CD8-positive, alpha-beta T cell (primary cell): ENCODE measurements at regions of chr13 and their contacts with region 1.

Region 1: GRCh38 chr13:99656092-99656745 is 154.9 kb downstream of the TM9SF2 start:
- DNase-seq: peak; percentile 71 to 90 (median 86)
- ATAC-seq: peak; percentile 61
- H3K4me3 ChIP-seq: peak overlapping the region; percentile 30 to 32
- H3K4me3 Mint-ChIP-seq: peak overlapping the region; percentile 84
- H3K27ac ChIP-seq: peak overlapping the region; percentile 12 to 22
- H3K27ac Mint-ChIP-seq: peak overlapping the region; percentile 97
- H3K4me1 ChIP-seq: peaks cover 42% of the 10 kb centered on the region
- H3K4me1 Mint-ChIP-seq: peaks cover 47% of the 10 kb centered on the region
- H3K27me3 ChIP-seq: no peaks in the 10 kb centered on the region
- H3K27me3 Mint-ChIP-seq: no peaks in the 10 kb centered on the region
- CTCF ChIP-seq: peak; percentile 92

Region 2: DNA sequence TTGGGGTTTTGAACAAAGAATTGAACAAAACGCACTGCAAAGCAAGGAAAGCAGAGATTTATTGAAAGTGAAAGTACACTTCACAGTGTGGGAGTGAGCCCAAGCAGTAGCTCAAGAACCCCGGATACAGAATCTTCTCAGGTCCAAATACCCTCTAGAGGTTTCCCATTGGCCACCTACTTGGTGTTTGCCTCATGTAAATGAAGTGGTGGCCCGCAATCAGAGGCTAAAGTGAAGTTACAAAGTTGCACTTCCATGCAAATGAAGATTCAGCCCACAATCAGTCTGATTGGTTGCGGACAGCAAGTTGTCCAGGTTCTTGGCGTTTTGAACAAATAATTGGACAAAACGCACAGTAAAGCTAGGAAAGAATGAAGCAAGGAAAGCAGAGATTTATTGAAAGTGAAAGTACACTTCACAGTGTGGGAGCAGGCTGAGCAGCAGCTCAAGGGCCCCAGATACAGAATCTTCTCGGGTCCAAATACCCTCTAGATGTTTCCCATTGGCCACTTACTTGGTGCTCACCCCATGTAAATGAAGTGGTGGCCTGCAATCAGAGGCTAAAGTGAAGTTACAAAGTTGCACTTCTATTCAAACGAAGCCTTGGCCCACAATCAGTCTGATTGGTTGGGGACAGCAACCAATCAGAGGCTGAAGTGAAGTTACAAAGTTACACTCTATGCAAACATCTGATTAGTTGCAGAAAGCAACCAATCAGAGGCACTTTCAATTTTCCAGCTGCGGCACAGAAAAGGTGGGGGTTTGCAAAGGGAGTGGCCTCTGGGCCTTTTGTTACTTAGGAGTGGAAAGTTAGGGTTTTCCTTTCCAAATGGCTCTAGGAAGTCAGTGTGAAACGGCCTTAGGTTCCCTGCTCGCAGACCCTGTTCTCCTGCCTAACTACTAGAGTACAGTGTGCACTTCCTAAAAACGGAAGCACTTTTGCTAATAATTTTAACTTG is 159.8 kb before region 1 on chr13:
- CTCF ChIA-PET with region 1: no interaction called
- POLR2A ChIA-PET with region 1: no interaction called
- intact Hi-C with region 1: no loop called
- DNase-seq: peak; percentile 41 to 90 (median 65)
- ATAC-seq: peak; percentile 42
- H3K4me3 ChIP-seq: peak overlapping the region; percentile 57 to 63
- H3K4me3 Mint-ChIP-seq: peak overlapping the region; percentile 88
- H3K27ac ChIP-seq: peak overlapping the region; percentile 53 to 79
- H3K27ac Mint-ChIP-seq: peak overlapping the region; percentile 94
- H3K4me1 ChIP-seq: peaks cover 46% of the 10 kb centered on the region
- H3K4me1 Mint-ChIP-seq: peaks cover 60% of the 10 kb centered on the region
- H3K27me3 ChIP-seq: no peaks in the 10 kb centered on the region
- H3K27me3 Mint-ChIP-seq: no peaks in the 10 kb centered on the region
- CTCF ChIP-seq: no peak

Region 3: GRCh38 chr13:99528547-99528946 is 127.7 kb before region 1 on chr13:
- CTCF ChIA-PET with region 1: interaction called, 9 read pairs
- POLR2A ChIA-PET with region 1: no interaction called
- intact Hi-C with region 1: loop called in 1 of 2 experiments (anchors 2 kb)
- DNase-seq: peak in 4 of 9 experiments; percentile 13 to 59 (median 36)
- ATAC-seq: peak; percentile 46
- H3K4me3 ChIP-seq: no peak overlapping the region
- H3K4me3 Mint-ChIP-seq: no peak overlapping the region
- H3K27ac ChIP-seq: no peak overlapping the region
- H3K27ac Mint-ChIP-seq: no peak overlapping the region
- H3K4me1 ChIP-seq: peaks cover 12% of the 10 kb centered on the region
- H3K4me1 Mint-ChIP-seq: peaks cover 46% of the 10 kb centered on the region
- H3K27me3 ChIP-seq: no peaks in the 10 kb centered on the region
- H3K27me3 Mint-ChIP-seq: no peaks in the 10 kb centered on the region
- CTCF ChIP-seq: peak; percentile 32

Region 4: DNA sequence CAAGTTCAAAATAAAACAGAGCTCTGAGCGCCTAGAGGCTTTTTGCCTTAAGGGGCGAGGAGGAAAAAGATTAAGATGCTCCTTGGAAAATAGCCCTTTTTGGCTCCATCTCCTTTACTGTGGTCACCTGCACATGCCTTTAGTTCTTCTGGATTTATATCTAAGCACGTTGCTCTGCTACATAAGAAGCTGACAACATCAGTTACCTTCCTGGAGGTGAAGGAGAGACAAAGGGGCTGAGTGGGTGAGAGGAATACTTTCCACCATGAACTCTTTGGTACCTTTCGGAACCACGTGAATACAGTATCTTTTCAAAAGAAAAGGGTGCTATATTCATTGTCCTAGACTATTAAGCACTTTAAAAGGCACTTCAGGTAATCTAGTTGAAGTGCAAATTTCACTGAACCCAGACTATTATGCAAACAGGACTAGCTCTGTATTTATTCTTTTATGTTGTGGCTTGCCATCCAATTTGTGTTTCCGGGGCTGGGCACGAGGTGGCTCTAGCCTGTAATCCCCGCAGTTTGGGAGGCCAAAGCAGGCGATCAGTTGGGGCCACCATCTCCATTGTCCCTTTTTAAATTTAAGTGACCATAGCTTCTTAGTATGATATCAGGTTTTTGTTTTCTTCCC is 46.6 kb after region 1 on chr13:
- CTCF ChIA-PET with region 1: no interaction called
- POLR2A ChIA-PET with region 1: no interaction called
- intact Hi-C with region 1: no loop called
- DNase-seq: no peak
- ATAC-seq: no peak
- H3K4me3 ChIP-seq: no peak overlapping the region
- H3K4me3 Mint-ChIP-seq: no peak overlapping the region
- H3K27ac ChIP-seq: no peak overlapping the region
- H3K27ac Mint-ChIP-seq: no peak overlapping the region
- H3K4me1 ChIP-seq: no peaks in the 10 kb centered on the region
- H3K4me1 Mint-ChIP-seq: peaks cover 4% of the 10 kb centered on the region
- H3K27me3 ChIP-seq: no peaks in the 10 kb centered on the region
- H3K27me3 Mint-ChIP-seq: no peaks in the 10 kb centered on the region
- CTCF ChIP-seq: no peak

Region 5: DNA sequence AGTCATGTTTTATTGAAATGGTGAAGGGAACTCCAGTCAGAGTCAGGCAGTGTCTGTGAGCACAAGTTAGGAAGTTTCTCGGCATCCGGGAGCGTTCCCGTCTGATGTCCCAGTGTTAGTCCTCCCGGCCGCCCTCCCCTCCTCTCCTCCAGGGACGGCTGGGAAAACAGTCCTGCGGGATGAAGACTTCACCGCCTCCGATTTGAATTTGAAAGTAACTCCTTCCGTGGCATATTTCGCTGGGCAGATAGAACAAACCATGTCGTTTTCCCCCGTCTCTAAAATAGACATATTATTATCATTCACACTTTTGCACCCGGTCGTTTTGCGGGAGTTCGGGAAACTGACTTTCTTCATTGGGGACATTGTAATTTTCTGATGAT is 238.6 kb after region 1 on chr13:
- CTCF ChIA-PET with region 1: interaction called, 33 read pairs
- POLR2A ChIA-PET with region 1: no interaction called
- intact Hi-C with region 1: no loop called
- DNase-seq: no peak
- ATAC-seq: no peak
- H3K4me3 ChIP-seq: peak overlapping the region; percentile 50 to 51
- H3K4me3 Mint-ChIP-seq: peak overlapping the region; percentile 82
- H3K27ac ChIP-seq: no peak overlapping the region
- H3K27ac Mint-ChIP-seq: no peak overlapping the region
- H3K4me1 ChIP-seq: peaks cover 15% of the 10 kb centered on the region
- H3K4me1 Mint-ChIP-seq: peaks cover 14% of the 10 kb centered on the region
- H3K27me3 ChIP-seq: peaks cover 11 to 12% of the 10 kb centered on the region in 2 experiments
- H3K27me3 Mint-ChIP-seq: peaks cover 46% of the 10 kb centered on the region
- CTCF ChIP-seq: no peak

Region 6: GRCh38 chr13:100088644-100089464 is 432.6 kb after region 1 on chr13 and contains the start of gene PCCA:
- CTCF ChIA-PET with region 1: interaction called, 4 read pairs
- POLR2A ChIA-PET with region 1: no interaction called
- intact Hi-C with region 1: loop called in 1 of 2 experiments (anchors 2 kb)
- DNase-seq: peak; percentile 34 to 84 (median 78)
- ATAC-seq: peak; percentile 71
- H3K4me3 ChIP-seq: peak within 1 kb of the TSS; percentile 81 to 88
- H3K4me3 Mint-ChIP-seq: peak within 1 kb of the TSS; percentile 98
- H3K27ac ChIP-seq: peak within 1 kb of the TSS; percentile 35 to 40
- H3K27ac Mint-ChIP-seq: peak within 1 kb of the TSS; percentile 82
- H3K4me1 ChIP-seq: peaks cover 28% of the 10 kb centered on the region
- H3K4me1 Mint-ChIP-seq: peaks cover 30% of the 10 kb centered on the region
- H3K27me3 ChIP-seq: no peaks in the 10 kb centered on the region
- H3K27me3 Mint-ChIP-seq: no peaks in the 10 kb centered on the region
- CTCF ChIP-seq: no peak
- total RNA-seq, gene PCCA: 6.2 to 7.5 TPM

Region 7: GRCh38 chr13:100542826-100543156 is 886.6 kb after region 1 on chr13:
- CTCF ChIA-PET with region 1: interaction called, 10 read pairs
- POLR2A ChIA-PET with region 1: no interaction called
- intact Hi-C with region 1: loop called (anchors 1 to 10 kb)
- DNase-seq: peak in 2 of 9 experiments; percentile 30 to 55
- ATAC-seq: peak; percentile 69
- H3K4me3 ChIP-seq: no peak overlapping the region
- H3K4me3 Mint-ChIP-seq: peak overlapping the region; percentile 52
- H3K27ac ChIP-seq: no peak overlapping the region
- H3K27ac Mint-ChIP-seq: no peak overlapping the region
- H3K4me1 ChIP-seq: peaks cover 10% of the 10 kb centered on the region
- H3K4me1 Mint-ChIP-seq: peaks cover 28% of the 10 kb centered on the region
- H3K27me3 ChIP-seq: no peaks in the 10 kb centered on the region
- H3K27me3 Mint-ChIP-seq: no peaks in the 10 kb centered on the region
- CTCF ChIP-seq: peak; percentile 54

Region 8: DNA sequence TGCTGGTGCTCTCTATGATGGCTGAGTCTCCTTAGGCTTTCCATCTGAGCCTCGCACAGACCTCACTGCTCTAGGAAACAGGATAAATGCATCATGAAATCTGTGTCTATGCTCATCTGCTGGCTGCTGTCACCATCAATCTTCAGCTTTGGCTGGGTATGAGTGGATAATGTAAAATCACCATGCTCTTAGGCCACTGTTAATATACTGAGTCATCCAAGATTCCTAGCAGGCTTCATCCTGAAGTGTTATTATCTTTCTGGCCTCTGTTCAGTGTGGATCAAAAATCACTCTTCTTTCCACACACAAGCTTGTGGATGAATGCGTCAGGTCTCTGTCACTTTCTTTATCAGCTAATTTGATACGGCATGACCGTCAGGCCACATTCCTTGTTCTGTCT is 1442.7 kb after region 1 on chr13:
- CTCF ChIA-PET with region 1: no interaction called
- POLR2A ChIA-PET with region 1: no interaction called
- intact Hi-C with region 1: loop called in 1 of 2 experiments (anchors 5 kb)
- DNase-seq: no peak
- ATAC-seq: no peak
- H3K4me3 ChIP-seq: no peak overlapping the region
- H3K4me3 Mint-ChIP-seq: no peak overlapping the region
- H3K27ac ChIP-seq: no peak overlapping the region
- H3K27ac Mint-ChIP-seq: no peak overlapping the region
- H3K4me1 ChIP-seq: no peaks in the 10 kb centered on the region
- H3K4me1 Mint-ChIP-seq: no peaks in the 10 kb centered on the region
- H3K27me3 ChIP-seq: no peaks in the 10 kb centered on the region
- H3K27me3 Mint-ChIP-seq: peaks cover 8% of the 10 kb centered on the region
- CTCF ChIP-seq: no peak